RWPE1 (cell line): ENCODE measurements at regions of chr3 and their contacts with region 1.

Region 1: DNA sequence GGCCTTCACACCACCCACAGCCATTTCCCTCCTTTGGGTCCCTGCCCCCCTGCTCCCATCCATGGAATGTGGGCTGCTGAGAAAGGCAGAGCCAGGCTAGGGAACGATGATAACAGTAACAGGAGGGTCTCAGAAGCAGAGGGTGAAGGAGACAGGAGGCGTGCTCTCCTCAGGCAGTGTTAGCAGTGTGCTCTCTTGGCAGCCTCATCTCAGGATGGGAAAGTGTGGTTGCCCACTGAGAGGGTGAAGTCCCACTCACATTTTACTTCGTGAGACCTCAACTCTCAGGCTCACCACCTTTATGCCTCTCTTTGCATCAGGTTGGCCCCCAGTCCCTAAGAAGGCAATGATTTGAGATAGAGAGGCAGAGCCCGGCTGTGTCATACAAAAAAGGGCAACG is 24.5 kb downstream of the TIGIT start:
- DNase-seq: no peak
- H3K27ac ChIP-seq: no peak overlapping the region
- CTCF ChIP-seq: no peak

Region 2: DNA sequence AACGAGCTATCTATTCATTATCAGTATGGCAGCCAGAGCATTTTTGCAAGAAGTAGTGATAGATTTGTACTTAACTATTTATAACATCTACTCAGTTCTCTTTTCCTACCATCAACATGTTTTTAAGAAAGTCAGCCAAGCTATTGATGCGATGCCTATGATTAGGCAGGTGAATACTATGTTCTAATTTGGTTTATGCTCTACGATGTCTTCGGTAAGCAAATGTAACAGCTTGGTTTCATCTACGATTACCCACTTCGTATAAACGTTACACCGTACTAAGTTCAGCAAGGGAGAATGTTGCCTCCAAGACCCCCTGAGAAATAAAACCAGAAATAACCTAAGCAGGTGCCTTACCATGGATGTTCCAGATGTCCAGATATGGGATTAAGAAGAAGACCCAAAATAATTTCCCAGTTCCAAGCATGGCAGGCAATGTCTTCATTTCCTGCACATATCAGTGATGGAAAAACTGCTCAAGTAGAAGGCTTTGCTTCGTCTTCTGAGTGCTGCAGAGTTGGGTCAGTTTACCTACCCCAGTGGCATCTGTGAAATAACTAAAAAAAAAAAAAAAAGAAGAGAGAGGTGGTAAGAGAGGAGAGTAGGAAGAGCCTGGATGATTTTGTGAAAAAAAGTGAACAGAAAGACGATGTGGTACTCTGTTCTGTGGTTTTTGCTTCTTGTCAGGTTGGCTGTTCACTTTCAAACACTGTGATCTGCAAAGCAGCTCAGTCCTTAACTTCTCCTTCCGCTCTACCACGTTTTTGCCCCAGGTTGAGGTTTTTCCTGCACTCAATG is 1819.2 kb before region 1 on chr3 and contains the start of gene BTLA:
- CTCF ChIA-PET with region 1: interaction called, 10 read pairs
- POLR2A ChIA-PET with region 1: no interaction called
- DNase-seq: no peak
- H3K27ac ChIP-seq: no peak within 1 kb of the TSS
- CTCF ChIP-seq: no peak

Region 3: GRCh38 chr3:114152519-114153151 is 165.7 kb before region 1 on chr3:
- CTCF ChIA-PET with region 1: no interaction called
- POLR2A ChIA-PET with region 1: no interaction called
- DNase-seq: peak; percentile 64
- H3K27ac ChIP-seq: peak overlapping the region; percentile 83
- CTCF ChIP-seq: peak; percentile 93

Region 4: GRCh38 chr3:114285648-114286230 is 32.6 kb before region 1 on chr3:
- CTCF ChIA-PET with region 1: no interaction called
- POLR2A ChIA-PET with region 1: no interaction called
- DNase-seq: no peak
- H3K27ac ChIP-seq: no peak overlapping the region
- CTCF ChIP-seq: no peak

Region 5: DNA sequence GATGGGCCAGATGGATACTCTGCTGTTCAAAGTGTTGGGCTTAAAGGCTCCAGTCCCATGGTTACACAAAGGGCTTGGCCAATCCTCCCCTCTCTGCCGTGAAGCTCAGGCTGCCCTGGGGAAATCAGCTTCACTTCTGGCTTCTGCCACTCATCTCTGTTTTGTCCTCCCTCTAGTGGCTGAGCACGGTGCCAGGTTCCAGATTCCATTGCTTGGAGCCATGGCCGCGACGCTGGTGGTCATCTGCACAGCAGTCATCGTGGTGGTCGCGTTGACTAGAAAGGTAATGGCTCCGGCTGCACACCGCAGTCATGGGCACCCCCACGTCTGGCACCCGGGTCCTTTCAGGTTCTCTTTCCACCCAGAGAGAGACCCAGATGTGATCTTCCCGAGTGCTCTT is 18.9 kb before region 1 on chr3:
- CTCF ChIA-PET with region 1: no interaction called
- POLR2A ChIA-PET with region 1: no interaction called
- DNase-seq: peak; percentile 29
- H3K27ac ChIP-seq: no peak overlapping the region
- CTCF ChIP-seq: peak; percentile 17; the same call in 1 of the 2 replicates